Activated CD8-positive, alpha-beta T cell treated with anti-CD3 and anti-CD28 coated beads for 36 hours (primary cell): ENCODE measurements at regions of chr19 and their contacts with region 1.

Region 1: GRCh38 chr19:39435499-39436349 is at the start of gene RPS16:
- DNase-seq: peak; percentile 99
- ATAC-seq: peak; percentile 92
- H3K4me3 Mint-ChIP-seq: peak within 1 kb of the TSS; percentile 100
- H3K27ac Mint-ChIP-seq: peak within 1 kb of the TSS; percentile 99
- H3K4me1 Mint-ChIP-seq: peaks cover 49% of the 10 kb centered on the region
- H3K27me3 Mint-ChIP-seq: no peaks in the 10 kb centered on the region
- CTCF ChIP-seq: no peak
- total RNA-seq, gene RPS16: 3,249 to 3,324 TPM

Region 2: GRCh38 chr19:39372047-39372802 is 63.5 kb before region 1 on chr19:
- CTCF ChIA-PET with region 1: no interaction called
- POLR2A ChIA-PET with region 1: no interaction called
- intact Hi-C with region 1: no loop called
- DNase-seq: no peak
- ATAC-seq: no peak
- H3K4me3 Mint-ChIP-seq: no peak overlapping the region
- H3K27ac Mint-ChIP-seq: peak overlapping the region; percentile 10
- H3K4me1 Mint-ChIP-seq: no peaks in the 10 kb centered on the region
- H3K27me3 Mint-ChIP-seq: no peaks in the 10 kb centered on the region
- CTCF ChIP-seq: no peak

Region 3: DNA sequence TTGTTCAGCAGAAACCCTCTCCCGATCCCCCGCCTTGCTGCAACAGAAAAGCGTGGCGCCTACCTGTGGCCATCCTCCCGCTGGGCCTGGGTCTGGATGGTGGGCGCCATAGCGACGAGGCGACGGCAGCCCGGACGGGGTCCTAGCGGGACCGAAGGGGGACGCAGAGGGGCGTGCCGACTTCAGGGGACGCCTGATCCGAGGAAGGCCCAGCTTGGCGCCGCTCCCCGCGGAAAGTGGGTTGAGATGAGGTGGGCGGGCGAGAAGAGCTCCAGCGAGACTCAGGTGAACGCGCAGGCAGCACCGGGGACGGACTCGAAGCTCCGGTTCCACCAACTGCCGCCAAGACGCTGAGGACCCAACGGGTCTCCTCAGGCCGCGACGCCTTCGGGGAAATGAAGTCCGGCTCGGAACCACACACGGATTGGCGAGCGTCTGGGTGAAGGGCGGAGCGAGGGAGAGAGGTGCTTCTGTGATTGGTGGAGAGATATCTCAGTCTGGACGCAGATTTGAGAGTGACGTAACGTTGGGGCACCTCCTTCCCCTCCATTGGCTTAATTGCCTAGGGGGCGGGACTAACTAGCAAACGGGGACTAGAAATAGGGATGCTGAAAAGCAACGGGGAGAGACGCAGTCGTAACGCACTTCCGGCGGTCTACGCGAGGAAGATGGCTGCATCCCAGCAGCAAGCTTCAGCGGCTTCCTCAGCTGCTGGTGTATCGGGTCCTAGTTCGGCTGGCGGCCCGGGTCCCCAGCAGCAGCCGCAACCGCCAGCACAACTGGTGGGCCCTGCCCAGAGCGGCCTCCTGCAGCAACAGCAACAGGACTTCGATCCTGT is 44.8 kb before region 1 on chr19 and contains the starts of genes MED29 and PAF1:
- CTCF ChIA-PET with region 1: interaction called, 3 read pairs
- POLR2A ChIA-PET with region 1: interaction called, 27 read pairs
- intact Hi-C with region 1: no loop called
- DNase-seq: peak; percentile 98
- ATAC-seq: peak; percentile 94
- H3K4me3 Mint-ChIP-seq: peak within 1 kb of the TSS; percentile 97
- H3K27ac Mint-ChIP-seq: peak within 1 kb of the TSS; percentile 99
- H3K4me1 Mint-ChIP-seq: peaks cover 37% of the 10 kb centered on the region
- H3K27me3 Mint-ChIP-seq: no peaks in the 10 kb centered on the region
- CTCF ChIP-seq: no peak
- total RNA-seq, gene MED29: 19.5 to 19.8 TPM
- total RNA-seq, gene PAF1: 35.5 to 36.5 TPM

Region 4: GRCh38 chr19:39397360-39398296 is 38.1 kb before region 1 on chr19:
- CTCF ChIA-PET with region 1: interaction called, 4 read pairs
- POLR2A ChIA-PET with region 1: interaction called, 20 read pairs
- intact Hi-C with region 1: no loop called
- DNase-seq: peak; percentile 97
- ATAC-seq: peak; percentile 64
- H3K4me3 Mint-ChIP-seq: peak overlapping the region; percentile 44
- H3K27ac Mint-ChIP-seq: peak overlapping the region; percentile 90
- H3K4me1 Mint-ChIP-seq: peaks cover 65% of the 10 kb centered on the region
- H3K27me3 Mint-ChIP-seq: no peaks in the 10 kb centered on the region
- CTCF ChIP-seq: peak; percentile 92

Region 5: GRCh38 chr19:39423258-39424086 is 12.3 kb before region 1 on chr19:
- CTCF ChIA-PET with region 1: interaction called, 4 read pairs
- POLR2A ChIA-PET with region 1: interaction called, 66 read pairs
- intact Hi-C with region 1: no loop called
- DNase-seq: no peak
- ATAC-seq: no peak
- H3K4me3 Mint-ChIP-seq: no peak overlapping the region
- H3K27ac Mint-ChIP-seq: no peak overlapping the region
- H3K4me1 Mint-ChIP-seq: no peaks in the 10 kb centered on the region
- H3K27me3 Mint-ChIP-seq: no peaks in the 10 kb centered on the region
- CTCF ChIP-seq: no peak

Region 6: GRCh38 chr19:39502640-39503417 is 67.1 kb after region 1 on chr19:
- CTCF ChIA-PET with region 1: interaction called, 16 read pairs
- POLR2A ChIA-PET with region 1: interaction called, 14 read pairs
- intact Hi-C with region 1: no loop called
- DNase-seq: peak; percentile 76
- ATAC-seq: peak; percentile 67
- H3K4me3 Mint-ChIP-seq: no peak overlapping the region
- H3K27ac Mint-ChIP-seq: no peak overlapping the region
- H3K4me1 Mint-ChIP-seq: peaks cover 33% of the 10 kb centered on the region
- H3K27me3 Mint-ChIP-seq: peaks cover 64% of the 10 kb centered on the region
- CTCF ChIP-seq: peak; percentile 98

Region 7: GRCh38 chr19:39532233-39533002 is 96.7 kb after region 1 on chr19 and contains the start of gene EID2B:
- CTCF ChIA-PET with region 1: interaction called, 16 read pairs
- POLR2A ChIA-PET with region 1: interaction called, 12 read pairs
- intact Hi-C with region 1: loop called (anchors 5 kb)
- DNase-seq: peak; percentile 95
- ATAC-seq: peak; percentile 99
- H3K4me3 Mint-ChIP-seq: peak within 1 kb of the TSS; percentile 92
- H3K27ac Mint-ChIP-seq: peak within 1 kb of the TSS; percentile 85
- H3K4me1 Mint-ChIP-seq: peaks cover 22% of the 10 kb centered on the region
- H3K27me3 Mint-ChIP-seq: no peaks in the 10 kb centered on the region
- CTCF ChIP-seq: peak; percentile 98
- total RNA-seq, gene EID2B: 3.0 TPM